Esophagus muscularis mucosa (tissue), 4 donors: ENCODE measurements at regions of chr1 and their contacts with region 1.

Region 1: DNA sequence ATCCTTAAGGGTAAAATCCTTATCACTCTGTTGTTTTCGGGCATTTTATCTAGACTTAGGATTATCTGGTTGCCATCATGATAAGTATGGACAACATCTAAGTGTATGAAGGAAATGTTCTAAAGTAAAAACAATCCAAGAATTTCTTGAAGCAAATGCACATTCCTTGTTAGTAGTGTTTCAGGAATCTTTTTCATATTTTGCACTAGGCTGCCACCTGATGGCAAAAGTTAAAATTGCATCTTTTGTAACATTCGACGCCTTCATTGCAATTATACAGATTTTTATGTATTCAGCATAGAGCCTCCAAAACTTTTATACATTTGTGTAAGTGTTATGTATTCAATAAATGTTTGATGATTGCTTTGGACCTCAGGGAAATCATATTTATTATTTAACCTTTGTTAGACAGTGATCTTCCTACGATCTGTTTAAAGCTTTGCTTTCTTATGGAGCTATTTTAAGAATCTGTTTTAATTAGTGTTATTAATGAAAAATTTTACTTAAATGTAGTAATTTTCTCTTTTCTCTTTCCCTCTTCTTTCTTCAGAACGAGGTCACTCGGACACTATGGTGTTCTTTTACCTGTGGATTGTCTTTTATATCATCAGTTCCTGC is 49.4 kb upstream of the KIAA1614 start:
- DNase-seq: no peak
- H3K4me3 ChIP-seq: no peak overlapping the region
- H3K27ac ChIP-seq: no peak overlapping the region
- H3K4me1 ChIP-seq: peaks cover 3 to 11% (median 5%) of the 10 kb centered on the region in 4 donors
- H3K27me3 ChIP-seq: no peaks in the 10 kb centered on the region
- CTCF ChIP-seq: peak; percentile 75 to 78 (median 75)
- EP300 ChIP-seq: no peak
- POLR2A ChIP-seq: no peak

Region 2: DNA sequence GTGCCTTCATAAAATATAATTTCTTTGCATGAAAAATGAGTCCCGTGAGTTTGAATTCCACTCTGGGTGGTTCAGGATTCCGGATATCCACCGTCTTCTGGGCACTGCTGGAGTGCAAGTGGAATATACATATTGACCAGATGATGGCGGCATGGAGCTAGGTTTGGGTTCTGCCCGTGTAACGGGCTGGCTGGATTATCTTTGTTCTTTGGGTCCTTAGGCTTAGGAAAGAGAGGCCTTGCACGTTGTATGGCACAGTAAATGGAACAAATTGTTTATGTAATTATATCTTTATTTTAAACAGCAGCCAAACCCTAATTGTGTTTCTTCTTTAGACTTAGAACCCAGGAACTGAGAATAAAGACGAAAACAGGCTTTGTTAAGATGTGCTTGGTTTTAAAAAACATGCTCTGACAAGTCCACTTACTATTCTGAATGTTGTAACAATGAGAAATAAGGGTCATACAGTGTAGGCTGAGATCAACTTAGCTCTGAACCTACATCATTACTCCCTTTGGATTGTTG is 347.3 kb before region 1 on chr1:
- intact Hi-C with region 1: loop called (anchors 5 kb)
- DNase-seq: no peak
- H3K4me3 ChIP-seq: no peak overlapping the region
- H3K27ac ChIP-seq: no peak overlapping the region
- H3K4me1 ChIP-seq: peaks cover 5 to 12% (median 11%) of the 10 kb centered on the region in 4 donors
- H3K27me3 ChIP-seq: peaks cover 0 to 5% (median 0%) of the 10 kb centered on the region in 4 donors
- CTCF ChIP-seq: peak; percentile 79 to 85 (median 85)
- EP300 ChIP-seq: no peak
- POLR2A ChIP-seq: no peak

Region 3: DNA sequence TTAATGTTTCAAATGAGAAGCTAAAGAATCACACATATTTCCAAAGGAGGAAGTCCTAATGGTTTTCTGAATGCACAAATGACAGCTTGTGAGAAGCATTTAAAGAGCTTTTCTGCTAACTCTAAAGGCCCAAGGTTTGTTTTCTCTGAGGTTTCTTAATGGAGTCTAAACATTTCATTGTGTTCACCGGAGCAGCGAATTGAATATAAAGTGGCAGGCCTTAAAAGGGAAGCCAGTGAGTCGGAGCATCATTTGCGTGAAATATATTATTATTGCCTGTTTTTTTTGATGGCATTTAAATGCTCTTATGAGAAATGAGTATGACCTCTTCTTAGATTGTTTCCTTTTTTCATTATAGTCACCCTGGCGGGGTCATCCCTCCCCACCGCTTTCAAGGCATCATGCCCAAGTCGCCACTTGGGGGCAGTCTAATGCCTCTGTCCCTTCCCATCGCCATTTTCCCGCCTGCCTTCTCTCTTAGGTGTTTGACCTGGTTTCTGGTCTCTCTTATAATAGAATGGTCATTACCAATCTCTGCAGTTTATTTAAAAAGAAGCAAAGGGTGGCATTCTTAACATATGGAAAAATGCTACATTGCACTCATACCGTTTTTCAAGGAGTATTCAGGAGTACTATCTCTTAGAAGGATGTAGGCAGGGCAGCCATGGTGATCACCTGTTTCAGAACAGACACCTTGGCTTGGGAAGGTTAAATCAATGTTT is 329.8 kb before region 1 on chr1:
- intact Hi-C with region 1: loop called (anchors 5 kb)
- DNase-seq: no peak
- H3K4me3 ChIP-seq: no peak overlapping the region
- H3K27ac ChIP-seq: no peak overlapping the region
- H3K4me1 ChIP-seq: peaks cover 4 to 9% (median 5%) of the 10 kb centered on the region in 4 donors
- H3K27me3 ChIP-seq: no peaks in the 10 kb centered on the region
- CTCF ChIP-seq: peak; percentile 81 to 87 (median 84)
- EP300 ChIP-seq: no peak
- POLR2A ChIP-seq: no peak

Region 4: GRCh38 chr1:180631766-180632325 is 231.4 kb before region 1 on chr1 and contains the start of gene XPR1:
- intact Hi-C with region 1: loop called (anchors 5 kb)
- DNase-seq: peak; percentile 100
- H3K4me3 ChIP-seq: peak within 1 kb of the TSS; percentile 87 to 99 (median 95)
- H3K27ac ChIP-seq: peak within 1 kb of the TSS; percentile 90 to 96 (median 96)
- H3K4me1 ChIP-seq: peaks cover 33 to 47% (median 39%) of the 10 kb centered on the region in 4 donors
- H3K27me3 ChIP-seq: no peaks in the 10 kb centered on the region
- CTCF ChIP-seq: peak; percentile 11 to 55 (median 47)
- EP300 ChIP-seq: no peak
- POLR2A ChIP-seq: peak; percentile 74
- total RNA-seq, gene XPR1: 15.8 to 26.7 (median 22.8) TPM

Region 5: GRCh38 chr1:180745098-180745497 is 118.2 kb before region 1 on chr1:
- intact Hi-C with region 1: no loop called
- DNase-seq: no peak
- H3K4me3 ChIP-seq: no peak overlapping the region
- H3K27ac ChIP-seq: no peak overlapping the region
- H3K4me1 ChIP-seq: no peaks in the 10 kb centered on the region
- H3K27me3 ChIP-seq: no peaks in the 10 kb centered on the region
- CTCF ChIP-seq: no peak
- EP300 ChIP-seq: no peak
- POLR2A ChIP-seq: no peak